Caco-2 (cell line): ENCODE measurements at regions of chr19 and their contacts with region 1.

Region 1: GRCh38 chr19:37906869-37907734 is at the start of gene SIPA1L3:
- DNase-seq: peak; percentile 99
- H3K4me3 ChIP-seq: peak within 1 kb of the TSS; percentile 77
- H3K4me3 Mint-ChIP-seq: peak within 1 kb of the TSS; percentile 84
- H3K27ac Mint-ChIP-seq: peak within 1 kb of the TSS; percentile 88
- H3K4me1 ChIP-seq: peaks cover 20% of the 10 kb centered on the region
- H3K4me1 Mint-ChIP-seq: peaks cover 23% of the 10 kb centered on the region
- H3K27me3 ChIP-seq: no peaks in the 10 kb centered on the region
- H3K27me3 Mint-ChIP-seq: no peaks in the 10 kb centered on the region
- CTCF ChIP-seq: no peak
- total RNA-seq, gene SIPA1L3: 125 and 129 TPM in 2 replicates

Region 2: DNA sequence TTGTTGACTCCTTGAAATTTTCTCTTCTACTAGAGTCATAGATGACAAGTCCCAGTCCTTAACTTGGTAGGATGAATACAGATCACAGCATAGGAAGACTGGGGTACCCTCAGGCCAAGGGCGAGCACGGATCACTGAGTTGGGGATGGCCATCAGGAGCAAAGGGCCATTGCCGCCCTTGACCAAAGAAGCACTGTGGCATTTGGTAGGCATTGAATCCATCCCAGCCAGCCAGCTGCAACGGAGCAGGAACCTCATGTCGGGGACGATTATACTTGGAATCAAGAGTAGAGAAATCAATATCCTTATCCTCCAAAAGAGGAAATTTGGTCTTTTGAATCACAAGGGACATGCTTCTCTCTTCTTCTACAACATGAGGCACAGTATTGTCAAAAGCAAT is 77.6 kb before region 1 on chr19:
- CTCF ChIA-PET with region 1: no interaction called
- POLR2A ChIA-PET with region 1: no interaction called
- intact Hi-C with region 1: no loop called
- DNase-seq: no peak
- H3K4me3 ChIP-seq: no peak overlapping the region
- H3K4me3 Mint-ChIP-seq: no peak overlapping the region
- H3K27ac Mint-ChIP-seq: no peak overlapping the region
- H3K4me1 ChIP-seq: no peaks in the 10 kb centered on the region
- H3K4me1 Mint-ChIP-seq: no peaks in the 10 kb centered on the region
- H3K27me3 ChIP-seq: no peaks in the 10 kb centered on the region
- H3K27me3 Mint-ChIP-seq: no peaks in the 10 kb centered on the region
- CTCF ChIP-seq: no peak

Region 3: DNA sequence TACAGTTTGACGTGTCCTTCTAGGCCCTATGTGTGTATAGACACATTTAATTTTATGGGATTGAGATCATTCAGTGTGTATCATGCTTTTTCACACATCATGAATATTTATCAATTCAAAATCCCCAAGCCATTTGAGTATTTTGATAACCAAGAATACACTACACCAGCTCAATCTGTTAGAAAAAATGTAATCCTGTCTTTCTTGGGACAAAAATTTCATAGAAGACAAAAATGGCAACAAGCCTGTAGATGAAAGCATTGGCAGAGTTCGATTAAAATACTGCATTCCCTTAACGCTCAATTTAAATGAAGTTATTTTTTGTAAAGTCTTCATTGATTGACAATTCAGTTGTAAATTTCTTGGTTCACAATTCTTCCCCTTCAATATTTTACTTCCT is 42.6 kb before region 1 on chr19:
- CTCF ChIA-PET with region 1: no interaction called
- POLR2A ChIA-PET with region 1: no interaction called
- intact Hi-C with region 1: no loop called
- DNase-seq: no peak
- H3K4me3 ChIP-seq: no peak overlapping the region
- H3K4me3 Mint-ChIP-seq: no peak overlapping the region
- H3K27ac Mint-ChIP-seq: no peak overlapping the region
- H3K4me1 ChIP-seq: no peaks in the 10 kb centered on the region
- H3K4me1 Mint-ChIP-seq: peaks cover 7% of the 10 kb centered on the region
- H3K27me3 ChIP-seq: no peaks in the 10 kb centered on the region
- H3K27me3 Mint-ChIP-seq: no peaks in the 10 kb centered on the region
- CTCF ChIP-seq: no peak

Region 4: DNA sequence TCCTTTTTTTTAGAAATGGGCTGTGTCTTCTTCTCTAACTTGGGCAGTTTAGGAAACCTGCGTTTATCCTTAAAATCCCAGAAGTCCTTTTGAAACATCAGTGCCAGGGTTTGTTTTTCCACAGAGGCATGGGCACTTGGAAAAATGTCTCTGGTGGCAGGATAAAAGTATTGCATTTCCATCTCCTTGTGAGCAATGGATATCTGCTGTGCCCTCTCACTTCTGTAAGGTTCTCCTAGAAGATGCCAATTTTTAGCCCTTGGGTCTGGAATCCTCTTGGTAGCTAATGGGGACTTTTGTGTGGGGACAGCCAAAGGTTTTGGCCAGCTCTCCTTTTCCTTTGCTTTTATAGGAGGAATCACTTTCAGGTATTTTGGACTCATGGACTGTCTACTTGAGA is 21.7 kb before region 1 on chr19:
- CTCF ChIA-PET with region 1: no interaction called
- POLR2A ChIA-PET with region 1: no interaction called
- intact Hi-C with region 1: no loop called
- DNase-seq: no peak
- H3K4me3 ChIP-seq: no peak overlapping the region
- H3K4me3 Mint-ChIP-seq: no peak overlapping the region
- H3K27ac Mint-ChIP-seq: no peak overlapping the region
- H3K4me1 ChIP-seq: no peaks in the 10 kb centered on the region
- H3K4me1 Mint-ChIP-seq: no peaks in the 10 kb centered on the region
- H3K27me3 ChIP-seq: no peaks in the 10 kb centered on the region; the same call in 1 of the 2 replicates
- H3K27me3 Mint-ChIP-seq: no peaks in the 10 kb centered on the region
- CTCF ChIP-seq: no peak

Region 5: DNA sequence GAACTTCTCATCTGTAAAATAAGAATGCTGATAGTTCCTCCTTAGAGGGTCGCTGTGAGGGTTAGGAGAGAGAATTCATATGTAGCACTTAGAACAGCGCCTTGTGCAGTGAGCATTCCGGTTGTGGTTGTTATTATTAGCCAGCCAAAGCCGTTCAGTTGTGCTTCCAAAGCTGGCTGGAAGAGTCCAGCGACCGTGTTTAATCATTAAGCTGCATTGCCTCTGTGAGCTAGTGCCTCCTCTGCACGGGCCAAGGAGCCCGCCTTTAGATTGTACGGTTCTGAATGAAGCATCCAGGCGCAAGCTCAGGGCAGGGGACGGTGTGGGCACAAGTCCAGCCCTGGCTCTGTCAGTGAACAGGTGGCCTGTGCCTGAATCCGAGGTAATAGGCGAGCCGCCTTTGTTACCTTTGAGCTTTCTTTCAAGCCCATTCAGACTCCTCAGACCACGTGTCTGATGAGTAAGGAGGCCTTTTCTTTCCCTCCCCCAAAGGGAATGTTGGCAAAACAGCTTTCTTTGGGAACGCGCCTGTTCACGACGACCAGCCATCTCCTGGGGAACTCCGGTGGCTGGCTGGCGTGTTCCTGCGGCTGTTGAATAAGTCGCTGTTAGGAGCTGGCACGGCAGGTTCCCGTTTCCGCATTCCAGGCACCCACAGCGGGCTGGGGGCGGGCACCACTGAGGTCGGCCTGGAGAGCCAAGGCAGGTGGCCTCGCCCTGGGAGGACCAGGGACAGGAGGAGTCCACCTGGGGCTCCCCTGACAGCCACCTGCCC is 25.0 kb after region 1 on chr19:
- CTCF ChIA-PET with region 1: interaction called, 28 read pairs
- POLR2A ChIA-PET with region 1: interaction called, 102 read pairs
- intact Hi-C with region 1: loop called (anchors 1 kb)
- DNase-seq: peak; percentile 92 to 94
- H3K4me3 ChIP-seq: peak overlapping the region; percentile 48
- H3K4me3 Mint-ChIP-seq: peak overlapping the region; percentile 75
- H3K27ac Mint-ChIP-seq: peak overlapping the region; percentile 97
- H3K4me1 ChIP-seq: peaks cover 45% of the 10 kb centered on the region
- H3K4me1 Mint-ChIP-seq: peaks cover 36% of the 10 kb centered on the region
- H3K27me3 ChIP-seq: no peaks in the 10 kb centered on the region
- H3K27me3 Mint-ChIP-seq: no peaks in the 10 kb centered on the region
- CTCF ChIP-seq: no peak

Region 6: GRCh38 chr19:37988758-37989635 is 81.9 kb after region 1 on chr19:
- CTCF ChIA-PET with region 1: interaction called, 26 read pairs
- POLR2A ChIA-PET with region 1: interaction called, 12 read pairs
- intact Hi-C with region 1: loop called (anchors 1 kb)
- DNase-seq: no peak
- H3K4me3 ChIP-seq: no peak overlapping the region
- H3K4me3 Mint-ChIP-seq: no peak overlapping the region
- H3K27ac Mint-ChIP-seq: peak overlapping the region; percentile 92
- H3K4me1 ChIP-seq: peaks cover 69% of the 10 kb centered on the region
- H3K4me1 Mint-ChIP-seq: peaks cover 55% of the 10 kb centered on the region
- H3K27me3 ChIP-seq: no peaks in the 10 kb centered on the region
- H3K27me3 Mint-ChIP-seq: no peaks in the 10 kb centered on the region
- CTCF ChIP-seq: no peak

Region 7: GRCh38 chr19:38095411-38096308 is 188.6 kb after region 1 on chr19:
- CTCF ChIA-PET with region 1: interaction called, 4 read pairs
- POLR2A ChIA-PET with region 1: no interaction called
- intact Hi-C with region 1: loop called (anchors 1 kb)
- DNase-seq: peak; percentile 70 to 75
- H3K4me3 ChIP-seq: no peak overlapping the region
- H3K4me3 Mint-ChIP-seq: no peak overlapping the region
- H3K27ac Mint-ChIP-seq: peak overlapping the region; percentile 79
- H3K4me1 ChIP-seq: no peaks in the 10 kb centered on the region
- H3K4me1 Mint-ChIP-seq: no peaks in the 10 kb centered on the region
- H3K27me3 ChIP-seq: no peaks in the 10 kb centered on the region
- H3K27me3 Mint-ChIP-seq: no peaks in the 10 kb centered on the region
- CTCF ChIP-seq: peak; percentile 64 to 85